GM12878 (cell line): ENCODE measurements at regions of chr14 and their contacts with region 1.

Region 1: DNA sequence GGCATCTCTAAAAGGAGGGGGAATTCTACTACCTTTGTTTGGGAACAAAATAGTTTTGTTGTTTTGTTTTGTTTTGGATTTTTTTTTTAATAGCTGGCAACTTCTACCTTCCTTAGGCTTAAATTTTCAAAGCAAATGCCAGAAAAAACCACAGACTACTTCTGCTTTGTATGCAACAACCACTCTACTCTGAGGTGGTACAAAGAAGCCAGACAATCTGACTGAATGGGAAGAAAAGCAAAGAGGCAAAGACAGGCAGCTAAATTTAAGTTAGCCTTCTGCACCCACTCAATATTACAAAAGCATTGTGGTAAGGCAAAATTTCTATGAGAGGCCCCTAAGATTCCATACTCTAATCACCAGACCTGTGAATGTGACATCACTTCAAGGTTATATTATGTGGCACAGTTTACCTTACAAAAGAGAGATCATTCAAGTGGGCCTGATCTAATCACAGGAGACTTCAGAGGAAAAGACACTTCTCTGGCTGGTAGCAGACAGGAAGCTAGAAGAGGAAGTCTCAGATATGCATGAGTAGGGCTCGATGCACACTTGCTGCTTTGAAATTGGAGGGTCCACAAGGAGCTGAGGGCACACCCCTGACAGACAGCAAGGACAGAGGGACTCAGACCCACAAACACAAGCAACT is 566.6 kb downstream of the RPS29 start:
- DNase-seq: no peak
- ATAC-seq: peak; percentile 52
- H3K4me3 ChIP-seq: no peak overlapping the region
- H3K27ac ChIP-seq: no peak overlapping the region
- H3K4me1 ChIP-seq: no peaks in the 10 kb centered on the region
- H3K27me3 ChIP-seq: no peaks in the 10 kb centered on the region
- CTCF ChIP-seq: no peak
- EP300 ChIP-seq: no peak
- POLR2A ChIP-seq: no peak
- RAD21 ChIP-seq: no peak

Region 2: DNA sequence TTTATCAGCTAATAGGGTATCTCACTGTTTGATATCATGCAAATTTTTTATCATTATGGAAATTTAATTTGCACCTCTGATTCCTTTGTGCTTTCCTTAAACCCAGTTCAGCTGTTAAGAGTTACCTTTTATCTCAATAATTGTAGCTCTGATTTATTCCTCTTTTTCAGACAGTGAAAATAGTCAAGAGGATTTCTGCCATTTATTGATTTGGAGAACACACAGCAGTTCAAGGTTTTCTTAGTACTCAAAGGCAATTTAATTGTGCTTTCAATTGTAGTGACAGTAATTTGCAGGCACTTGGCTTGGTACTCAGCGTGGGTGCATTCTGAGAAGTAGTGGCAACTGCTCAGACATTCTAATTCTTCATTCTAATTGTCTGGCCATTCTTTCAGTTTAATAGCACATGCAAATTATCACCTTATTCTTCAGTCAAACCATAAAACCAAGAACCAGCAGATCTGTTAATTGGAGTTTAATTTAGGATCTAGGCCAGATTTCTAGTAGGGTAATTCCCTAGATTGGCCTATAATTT is 142.7 kb before region 1 on chr14:
- CTCF ChIA-PET with region 1: no interaction called
- POLR2A ChIA-PET with region 1: no interaction called
- RAD21 ChIA-PET with region 1: no interaction called
- SMC1A ChIA-PET with region 1: no interaction called
- in situ Hi-C with region 1: loop called (anchors 5 kb)
- intact Hi-C with region 1: no loop called
- DNase-seq: no peak
- ATAC-seq: no peak
- H3K4me3 ChIP-seq: no peak overlapping the region
- H3K27ac ChIP-seq: no peak overlapping the region
- H3K4me1 ChIP-seq: no peaks in the 10 kb centered on the region
- H3K27me3 ChIP-seq: no peaks in the 10 kb centered on the region
- CTCF ChIP-seq: no peak
- EP300 ChIP-seq: no peak
- POLR2A ChIP-seq: no peak
- RAD21 ChIP-seq: no peak